ENCODE measurements at regions of chr1 and their contacts with region 1.

Region 1: DNA sequence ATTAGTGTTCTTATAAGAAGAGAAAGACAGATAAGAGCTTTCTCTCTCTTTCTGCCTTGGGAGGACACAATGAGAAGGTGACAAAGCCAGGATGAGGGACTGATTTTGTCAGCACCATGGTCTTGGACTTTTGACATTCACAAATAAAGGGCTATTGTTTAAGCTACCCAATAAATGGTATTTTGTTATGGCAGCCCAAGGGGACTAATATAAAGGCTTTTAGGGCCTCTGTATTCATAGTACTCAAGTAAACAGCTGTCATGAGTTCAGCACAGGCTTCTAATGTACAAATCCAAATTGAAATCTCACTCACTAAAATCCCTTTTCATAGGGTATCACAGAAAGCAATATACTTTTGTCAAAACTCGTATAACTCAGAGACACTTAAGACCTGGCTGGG is 242.7 kb downstream of the FAF1 start:
- DNase-seq: no peak
- H3K4me3 ChIP-seq: no peak overlapping the region
- H3K27ac ChIP-seq: no peak overlapping the region
- H3K4me1 ChIP-seq: no peaks in the 10 kb centered on the region; a peak in 1 of 7 replicates
- H3K27me3 ChIP-seq: no peaks in the 10 kb centered on the region
- CTCF ChIP-seq: no peak
- EP300 ChIP-seq: no peak
- POLR2A ChIP-seq: no peak
- RAD21 ChIP-seq: no peak

Region 2: GRCh38 chr1:50735443-50735842 is 18.1 kb after region 1 on chr1:
- CTCF ChIA-PET with region 1: interaction called, 16 read pairs
- POLR2A ChIA-PET with region 1: no interaction called
- DNase-seq: no peak
- H3K4me3 ChIP-seq: no peak overlapping the region
- H3K27ac ChIP-seq: no peak overlapping the region
- H3K4me1 ChIP-seq: no peaks in the 10 kb centered on the region
- H3K27me3 ChIP-seq: peaks cover 0 to 1% (median 0%) of the 10 kb centered on the region in 4 experiments; a peak in 1 of 7 replicates
- CTCF ChIP-seq: peak in 1 of 3 experiments; percentile 33; a peak in 1 of 4 replicates
- EP300 ChIP-seq: no peak
- POLR2A ChIP-seq: no peak
- RAD21 ChIP-seq: peak in 1 of 2 experiments; percentile 31; a peak in 3 of 4 replicates

Measured in H1 (cell line).